Mammary epithelial cell (primary cell): ENCODE measurements at regions of chr15 and their contacts with region 1.

Region 1: DNA sequence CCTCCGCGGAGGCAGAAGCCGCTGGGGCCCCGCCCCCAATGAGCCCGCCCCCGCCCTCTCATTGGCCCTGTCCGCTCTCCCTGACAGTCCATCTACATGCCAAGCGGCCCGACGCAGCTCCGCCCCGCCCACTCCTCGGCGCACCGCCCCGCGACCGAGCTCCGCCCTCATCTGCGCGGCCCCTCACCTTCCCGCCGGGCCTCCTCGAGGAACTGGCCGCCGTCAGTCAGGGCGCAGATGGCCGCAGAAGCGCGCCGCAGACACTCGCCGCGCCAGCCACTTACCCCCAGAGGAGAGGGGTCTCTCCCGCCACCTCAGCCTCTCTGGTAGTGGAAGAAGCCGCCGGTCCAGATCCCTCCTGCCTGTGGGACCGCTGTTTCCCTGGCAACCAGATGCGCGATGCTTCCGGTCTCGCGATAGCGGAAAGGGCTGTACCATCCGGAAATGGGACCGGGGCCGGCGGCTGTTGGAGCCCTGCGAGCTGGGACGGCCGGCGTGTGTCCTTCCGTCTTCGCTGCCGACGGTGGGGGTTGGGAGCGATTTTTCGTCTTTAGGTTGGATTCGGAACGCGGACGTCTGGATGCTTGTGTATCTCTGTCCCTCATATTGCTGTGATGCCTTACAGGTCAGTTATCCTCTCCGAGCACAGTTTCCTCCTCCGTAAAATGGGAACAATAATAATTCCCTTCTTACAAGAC is at the start of gene FSIP1:
- DNase-seq: peak; percentile 96
- H3K4me3 ChIP-seq: peak within 1 kb of the TSS; percentile 76 to 93 (median 93)
- H3K27ac ChIP-seq: peak within 1 kb of the TSS; percentile 74
- H3K4me1 ChIP-seq: peaks cover 21% of the 10 kb centered on the region
- H3K27me3 ChIP-seq: no peaks in the 10 kb centered on the region
- CTCF ChIP-seq: no peak
- total RNA-seq, gene FSIP1: 3.6 to 3.8 TPM

Region 2: DNA sequence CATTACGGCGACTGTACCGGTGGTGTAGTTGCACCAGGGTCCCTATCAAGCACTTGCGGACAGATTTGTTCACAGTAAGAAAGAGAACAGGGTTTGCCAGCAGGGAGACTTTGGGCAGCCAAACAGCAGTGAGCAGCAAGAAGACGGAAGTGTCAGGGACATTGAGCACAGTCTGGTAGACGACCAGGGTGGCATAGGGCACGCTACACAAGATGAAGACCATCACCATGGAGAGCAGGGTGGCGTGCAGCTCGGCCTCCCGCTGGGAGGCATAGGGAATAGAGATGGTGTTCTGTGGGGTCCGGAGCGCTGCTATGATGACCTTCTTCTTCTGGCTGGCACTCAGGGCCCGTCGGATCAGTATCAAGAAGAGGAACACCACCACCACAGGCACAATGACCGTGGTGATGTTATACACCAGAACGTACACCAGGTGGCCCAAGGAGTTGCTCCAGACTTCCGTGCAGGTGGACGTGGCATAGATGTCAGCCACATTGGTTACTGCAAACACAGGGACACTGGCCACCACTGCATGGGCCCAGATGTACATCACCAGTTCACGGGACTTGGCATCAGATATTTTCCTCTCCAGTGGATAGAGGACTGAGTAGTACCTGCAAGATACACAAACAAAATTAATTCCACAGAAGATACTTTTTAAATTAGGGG is 19.2 kb after region 1 on chr15:
- CTCF ChIA-PET with region 1: no interaction called
- dilution Hi-C with region 1: no loop called
- in situ Hi-C with region 1: no loop called
- intact Hi-C with region 1: loop called (anchors 2 kb)
- DNase-seq: peak; percentile 28
- H3K4me3 ChIP-seq: no peak overlapping the region
- H3K27ac ChIP-seq: no peak overlapping the region
- H3K4me1 ChIP-seq: peaks cover 16% of the 10 kb centered on the region
- H3K27me3 ChIP-seq: no peaks in the 10 kb centered on the region
- CTCF ChIP-seq: peak; percentile 58 to 70

Region 3: DNA sequence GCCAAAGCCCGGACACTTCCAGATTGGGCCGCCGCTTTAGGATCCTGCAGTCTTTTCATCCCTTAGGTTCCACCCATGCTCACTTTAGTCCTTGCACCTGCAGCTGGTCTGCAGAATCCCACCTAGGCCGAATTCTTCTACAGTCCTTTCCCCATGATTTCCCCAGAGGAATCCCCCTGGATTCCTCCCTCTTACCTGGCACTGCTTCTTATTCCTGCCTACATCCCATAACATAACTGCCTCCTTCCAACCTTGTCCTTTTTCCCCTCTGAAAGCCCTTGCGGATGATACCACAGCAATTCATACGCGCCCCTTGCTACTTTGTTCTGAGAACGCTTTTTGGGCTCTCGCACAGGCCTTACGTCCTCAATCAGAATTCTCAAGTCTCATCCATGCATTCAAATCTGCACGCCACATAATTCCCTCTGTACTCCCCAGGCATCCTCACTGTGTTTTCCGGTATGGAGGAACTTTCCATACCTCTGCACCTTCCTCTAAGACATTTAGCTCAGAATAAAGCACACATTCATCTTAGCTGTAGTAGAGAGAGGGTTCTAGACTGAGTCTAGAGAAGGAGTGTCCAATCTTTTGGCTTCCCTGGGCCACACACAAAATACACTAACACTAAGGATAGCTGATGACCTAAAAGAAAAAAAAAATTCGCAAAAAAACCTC is 151.9 kb after region 1 on chr15:
- CTCF ChIA-PET with region 1: no interaction called
- dilution Hi-C with region 1: no loop called
- in situ Hi-C with region 1: no loop called
- intact Hi-C with region 1: loop called (anchors 2 kb)
- DNase-seq: peak; percentile 30
- H3K4me3 ChIP-seq: peak overlapping the region; percentile 64 to 76 (median 68)
- H3K27ac ChIP-seq: peak overlapping the region; percentile 92
- H3K4me1 ChIP-seq: peaks cover 23% of the 10 kb centered on the region
- H3K27me3 ChIP-seq: no peaks in the 10 kb centered on the region
- CTCF ChIP-seq: no peak

Region 4: DNA sequence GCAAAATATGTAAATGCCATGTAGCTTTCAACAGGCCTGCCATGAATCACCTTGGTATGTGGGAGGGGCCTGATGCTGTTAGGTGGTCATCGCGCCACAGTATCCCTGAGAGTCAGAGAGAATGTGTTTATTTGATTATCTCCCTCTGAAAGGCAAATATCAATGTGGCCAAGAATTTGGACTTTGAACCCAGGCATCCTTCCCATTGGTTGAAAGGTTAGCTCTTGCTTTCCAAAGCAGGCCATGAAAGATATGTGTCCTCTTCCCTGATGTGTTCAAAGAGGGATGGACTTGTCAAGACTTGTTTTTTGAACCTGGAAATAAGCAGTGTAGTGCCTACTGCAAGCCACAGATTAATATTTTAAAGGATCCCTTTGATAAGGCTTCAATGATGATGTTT is 219.7 kb after region 1 on chr15:
- CTCF ChIA-PET with region 1: no interaction called
- dilution Hi-C with region 1: no loop called
- in situ Hi-C with region 1: no loop called
- intact Hi-C with region 1: loop called (anchors 10 kb)
- DNase-seq: peak; percentile 28
- H3K4me3 ChIP-seq: no peak overlapping the region
- H3K27ac ChIP-seq: peak overlapping the region; percentile 15
- H3K4me1 ChIP-seq: peaks cover 13% of the 10 kb centered on the region
- H3K27me3 ChIP-seq: no peaks in the 10 kb centered on the region
- CTCF ChIP-seq: no peak

Region 5: GRCh38 chr15:40160689-40161688 is 378.4 kb after region 1 on chr15 and contains the start of gene BUB1B:
- CTCF ChIA-PET with region 1: no interaction called
- dilution Hi-C with region 1: no loop called
- in situ Hi-C with region 1: no loop called
- intact Hi-C with region 1: loop called (anchors 10 kb)
- DNase-seq: peak; percentile 90
- H3K4me3 ChIP-seq: peak within 1 kb of the TSS; percentile 81 to 97 (median 88)
- H3K27ac ChIP-seq: peak within 1 kb of the TSS; percentile 50
- H3K4me1 ChIP-seq: peaks cover 14% of the 10 kb centered on the region
- H3K27me3 ChIP-seq: no peaks in the 10 kb centered on the region
- CTCF ChIP-seq: no peak
- total RNA-seq, gene BUB1B: 2.8 to 34.6 TPM